Common myeloid progenitor, CD34-positive (primary cell): ENCODE measurements at regions of chr7 and their contacts with region 1.

Region 1: GRCh38 chr7:143361552-143362130 is 872 bp downstream of the FAM131B start:
- DNase-seq: no peak
- H3K4me3 ChIP-seq: peak overlapping the region in 4 of 7 experiments; percentile 44 to 81 (median 64)
- H3K27ac ChIP-seq: no peak overlapping the region
- H3K4me1 ChIP-seq: peaks cover 0 to 18% (median 13%) of the 10 kb centered on the region in 4 experiments
- H3K27me3 ChIP-seq: peaks cover 11 to 53% (median 24%) of the 10 kb centered on the region in 5 experiments

Region 2: DNA sequence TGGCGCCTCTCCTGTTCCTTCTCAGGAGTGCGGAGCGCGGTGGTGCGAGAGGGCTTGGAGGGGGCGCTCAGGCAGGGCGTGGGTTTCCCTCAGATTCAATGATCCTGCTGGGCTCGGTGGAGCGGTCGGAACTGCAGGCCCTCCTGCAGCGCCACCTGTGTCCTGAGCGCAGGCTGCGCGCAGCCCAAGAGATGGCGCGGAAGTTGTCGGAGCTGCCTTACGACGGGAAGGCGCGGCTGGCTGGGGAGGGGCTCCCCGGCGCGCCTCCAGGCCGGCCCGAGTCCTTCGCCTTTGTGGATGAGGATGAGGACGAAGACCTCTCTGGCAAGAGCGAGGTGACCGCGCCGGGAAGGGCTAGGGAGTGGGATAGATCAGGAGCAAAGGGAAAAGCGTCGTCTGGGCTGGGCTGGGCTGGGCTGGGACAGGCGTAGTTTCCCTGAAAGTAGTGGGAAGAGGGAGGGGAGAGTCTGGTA is 16.2 kb before region 1 on chr7:
- CTCF ChIA-PET with region 1: interaction called, 14 read pairs
- POLR2A ChIA-PET with region 1: no interaction called
- DNase-seq: peak; percentile 87 to 88 (median 87)
- H3K4me3 ChIP-seq: peak overlapping the region in 5 of 7 experiments; percentile 40 to 71 (median 56)
- H3K27ac ChIP-seq: no peak overlapping the region
- H3K4me1 ChIP-seq: peaks cover 0 to 13% (median 8%) of the 10 kb centered on the region in 4 experiments
- H3K27me3 ChIP-seq: peaks cover 0 to 5% (median 0%) of the 10 kb centered on the region in 5 experiments

Region 3: GRCh38 chr7:143372070-143372469 is 10.4 kb after region 1 on chr7:
- CTCF ChIA-PET with region 1: interaction called, 23 read pairs
- POLR2A ChIA-PET with region 1: no interaction called
- DNase-seq: peak; percentile 66 to 91 (median 80)
- H3K4me3 ChIP-seq: no peak overlapping the region
- H3K27ac ChIP-seq: no peak overlapping the region
- H3K4me1 ChIP-seq: peaks cover 24 to 53% (median 48%) of the 10 kb centered on the region in 4 experiments
- H3K27me3 ChIP-seq: no peaks in the 10 kb centered on the region

Region 4: DNA sequence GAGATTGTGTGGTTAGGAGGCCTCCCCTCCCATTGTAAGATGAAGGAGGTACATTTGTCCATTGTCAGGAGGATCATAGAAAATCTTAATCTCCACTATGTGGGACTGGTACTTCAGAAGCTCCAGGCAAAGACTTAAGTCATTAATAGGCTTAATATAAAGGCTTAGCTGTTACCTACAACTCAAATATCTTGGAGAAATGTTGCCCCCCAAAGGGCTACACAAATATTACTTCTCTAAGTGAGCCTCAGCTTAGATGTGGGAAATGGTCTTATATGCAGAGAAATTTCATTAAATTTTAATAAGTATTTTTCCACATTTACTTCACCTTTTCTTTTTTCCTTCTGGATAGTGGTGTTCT is 143.3 kb after region 1 on chr7:
- CTCF ChIA-PET with region 1: no interaction called
- POLR2A ChIA-PET with region 1: no interaction called
- DNase-seq: peak; percentile 55 to 73 (median 73)
- H3K4me3 ChIP-seq: no peak overlapping the region
- H3K27ac ChIP-seq: no peak overlapping the region
- H3K4me1 ChIP-seq: peaks cover 0 to 33% (median 9%) of the 10 kb centered on the region in 4 experiments
- H3K27me3 ChIP-seq: no peaks in the 10 kb centered on the region

Region 5: DNA sequence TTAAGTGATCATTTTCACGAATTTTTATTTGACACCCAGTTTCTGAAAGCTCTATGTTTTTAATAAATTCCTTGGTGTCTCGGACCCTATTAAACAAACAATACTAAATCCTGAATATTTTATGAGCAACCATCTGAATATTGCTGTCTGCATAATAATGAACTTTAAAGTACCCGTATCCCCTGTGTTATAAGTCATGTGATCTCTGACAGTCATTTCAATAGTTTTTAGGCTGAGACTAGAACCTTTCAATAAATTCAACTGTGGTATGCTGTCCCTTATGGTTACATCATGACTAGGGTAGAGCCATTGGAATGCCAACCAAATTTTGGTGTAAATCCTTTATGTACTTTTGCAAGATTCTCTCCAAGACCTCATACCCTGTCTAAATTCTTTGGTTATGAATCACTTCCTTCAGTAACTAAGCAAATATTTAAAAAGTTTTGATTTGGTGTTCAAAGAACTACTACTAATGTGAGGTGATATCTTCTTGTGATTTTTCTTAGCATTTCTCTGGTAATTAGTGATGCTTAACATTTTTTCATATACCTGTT is 617.6 kb after region 1 on chr7:
- CTCF ChIA-PET with region 1: no interaction called
- POLR2A ChIA-PET with region 1: no interaction called
- DNase-seq: no peak
- H3K4me3 ChIP-seq: no peak overlapping the region
- H3K27ac ChIP-seq: no peak overlapping the region
- H3K4me1 ChIP-seq: no peaks in the 10 kb centered on the region
- H3K27me3 ChIP-seq: no peaks in the 10 kb centered on the region

Region 6: GRCh38 chr7:144102041-144102440 is 740.4 kb after region 1 on chr7:
- CTCF ChIA-PET with region 1: no interaction called
- POLR2A ChIA-PET with region 1: no interaction called
- DNase-seq: no peak
- H3K4me3 ChIP-seq: no peak overlapping the region
- H3K27ac ChIP-seq: no peak overlapping the region
- H3K4me1 ChIP-seq: no peaks in the 10 kb centered on the region
- H3K27me3 ChIP-seq: no peaks in the 10 kb centered on the region